ENCODE measurements at regions of chr21 and their contacts with region 1.

Region 1: DNA sequence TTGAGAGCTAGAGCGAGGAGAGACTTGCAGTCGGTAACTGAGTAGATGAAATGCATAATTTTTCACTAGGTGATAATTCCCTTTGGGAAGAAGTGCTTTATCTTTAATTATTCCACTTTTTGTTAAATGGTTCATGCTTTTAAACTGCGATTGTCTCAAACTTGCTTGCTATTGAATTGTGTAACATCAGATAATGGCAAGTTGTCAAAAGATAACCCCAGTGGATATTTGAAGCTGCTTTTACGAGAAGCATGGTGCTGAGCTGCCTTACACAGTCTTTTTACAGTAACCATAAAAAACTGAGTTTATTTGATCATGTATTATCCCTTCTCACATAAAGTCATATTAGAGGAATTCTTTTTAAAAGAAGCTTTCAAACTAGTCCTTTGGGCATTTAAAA is 30.2 kb downstream of the TMEM50B start:
- DNase-seq: no peak
- H3K4me3 Mint-ChIP-seq: no peak overlapping the region
- H3K27ac Mint-ChIP-seq: no peak overlapping the region
- H3K4me1 Mint-ChIP-seq: peaks cover 4% of the 10 kb centered on the region
- H3K27me3 Mint-ChIP-seq: no peaks in the 10 kb centered on the region

Region 2: DNA sequence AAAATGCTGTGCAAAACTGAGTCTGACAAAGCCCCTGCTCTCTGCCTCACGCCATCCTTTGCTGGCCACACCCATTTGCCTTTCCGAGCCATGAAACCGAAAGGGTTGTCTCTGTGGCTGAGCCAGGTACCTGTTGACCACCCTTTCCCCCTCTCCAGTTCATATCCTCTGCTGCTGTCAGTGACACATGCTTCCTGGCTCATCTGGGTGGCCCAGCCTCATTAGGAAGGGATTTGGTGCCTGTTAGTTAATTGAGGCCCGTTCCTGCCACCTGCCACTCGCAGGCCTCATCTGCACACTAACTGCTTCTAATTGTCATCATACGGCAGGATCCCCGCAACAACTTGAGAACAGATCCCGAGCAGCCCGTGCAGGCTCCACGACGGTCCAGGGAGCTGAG is 300.4 kb before region 1 on chr21:
- CTCF ChIA-PET with region 1: no interaction called
- POLR2A ChIA-PET with region 1: no interaction called
- DNase-seq: no peak
- H3K4me3 Mint-ChIP-seq: no peak overlapping the region
- H3K27ac Mint-ChIP-seq: no peak overlapping the region
- H3K4me1 Mint-ChIP-seq: peaks cover 5% of the 10 kb centered on the region
- H3K27me3 Mint-ChIP-seq: peaks cover 11% of the 10 kb centered on the region

Region 3: GRCh38 chr21:33384841-33385331 is 64.7 kb before region 1 on chr21:
- CTCF ChIA-PET with region 1: interaction called, 10 read pairs
- POLR2A ChIA-PET with region 1: no interaction called
- DNase-seq: peak; percentile 58
- H3K4me3 Mint-ChIP-seq: peak overlapping the region; percentile 63
- H3K27ac Mint-ChIP-seq: peak overlapping the region; percentile 86
- H3K4me1 Mint-ChIP-seq: peaks cover 59% of the 10 kb centered on the region
- H3K27me3 Mint-ChIP-seq: peaks cover 38% of the 10 kb centered on the region